PC-9 (cell line): ENCODE measurements at regions of chr1 and their contacts with region 1.

Region 1: GRCh38 chr1:1890506-1891348 is at the start of gene GNB1:
- DNase-seq: peak; percentile 60 to 89
- H3K4me3 ChIP-seq: peak within 1 kb of the TSS; percentile 91
- H3K27ac ChIP-seq: no peak within 1 kb of the TSS
- H3K4me1 ChIP-seq: peaks cover 35% of the 10 kb centered on the region
- H3K27me3 ChIP-seq: no peaks in the 10 kb centered on the region
- CTCF ChIP-seq: no peak
- total RNA-seq, gene GNB1: 257 and 286 TPM in 2 replicates

Region 2: DNA sequence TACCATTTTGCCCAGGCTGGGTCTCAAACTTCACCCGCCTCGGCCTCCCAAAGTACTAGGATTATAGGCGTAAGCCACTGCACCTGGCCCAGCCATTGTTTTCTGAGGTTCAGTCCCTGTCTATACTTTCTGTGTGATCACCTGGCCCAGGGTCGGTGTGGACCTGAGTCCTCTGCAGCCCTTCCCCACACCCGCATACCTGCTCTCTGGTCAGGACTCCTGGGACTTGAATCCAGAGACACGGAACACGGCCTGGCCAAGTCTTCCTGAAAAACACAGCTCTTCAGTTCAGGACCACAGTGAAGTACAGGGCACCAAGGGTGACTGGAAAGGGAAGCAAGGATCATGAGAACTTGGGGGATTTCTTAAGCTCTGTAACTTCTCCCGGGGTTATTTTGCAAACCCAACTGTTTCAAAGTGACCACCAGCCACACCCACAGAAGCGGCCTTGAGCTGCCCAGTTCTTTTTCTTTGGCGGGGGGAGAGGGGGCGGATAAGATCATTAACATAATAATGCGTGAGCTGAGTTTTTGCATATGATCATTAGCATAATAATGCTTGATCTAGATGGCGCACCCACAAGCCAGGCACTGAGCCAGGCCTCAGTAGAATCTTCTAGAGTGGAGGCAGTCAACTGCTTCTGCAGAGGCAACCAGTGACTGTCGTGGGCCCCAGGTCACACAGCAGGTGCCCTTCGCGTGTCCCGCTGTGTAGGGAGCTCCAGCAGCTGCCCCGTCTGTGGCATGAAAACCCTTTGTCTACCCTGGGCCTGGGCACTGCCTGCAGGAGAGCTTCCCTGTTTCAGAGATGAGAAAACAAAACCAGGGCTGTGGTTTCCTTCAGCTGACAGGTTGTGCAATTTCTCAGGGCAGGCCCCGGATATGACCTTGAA is 110.8 kb before region 1 on chr1:
- CTCF ChIA-PET with region 1: no interaction called
- POLR2A ChIA-PET with region 1: no interaction called
- intact Hi-C with region 1: loop called (anchors 5 kb)
- DNase-seq: peak; percentile 60 to 69
- H3K4me3 ChIP-seq: peak overlapping the region; percentile 93; the same call in 1 of the 2 replicates
- H3K27ac ChIP-seq: peak overlapping the region; percentile 87
- H3K4me1 ChIP-seq: peaks cover 69% of the 10 kb centered on the region
- H3K27me3 ChIP-seq: no peaks in the 10 kb centered on the region
- CTCF ChIP-seq: no peak

Region 3: DNA sequence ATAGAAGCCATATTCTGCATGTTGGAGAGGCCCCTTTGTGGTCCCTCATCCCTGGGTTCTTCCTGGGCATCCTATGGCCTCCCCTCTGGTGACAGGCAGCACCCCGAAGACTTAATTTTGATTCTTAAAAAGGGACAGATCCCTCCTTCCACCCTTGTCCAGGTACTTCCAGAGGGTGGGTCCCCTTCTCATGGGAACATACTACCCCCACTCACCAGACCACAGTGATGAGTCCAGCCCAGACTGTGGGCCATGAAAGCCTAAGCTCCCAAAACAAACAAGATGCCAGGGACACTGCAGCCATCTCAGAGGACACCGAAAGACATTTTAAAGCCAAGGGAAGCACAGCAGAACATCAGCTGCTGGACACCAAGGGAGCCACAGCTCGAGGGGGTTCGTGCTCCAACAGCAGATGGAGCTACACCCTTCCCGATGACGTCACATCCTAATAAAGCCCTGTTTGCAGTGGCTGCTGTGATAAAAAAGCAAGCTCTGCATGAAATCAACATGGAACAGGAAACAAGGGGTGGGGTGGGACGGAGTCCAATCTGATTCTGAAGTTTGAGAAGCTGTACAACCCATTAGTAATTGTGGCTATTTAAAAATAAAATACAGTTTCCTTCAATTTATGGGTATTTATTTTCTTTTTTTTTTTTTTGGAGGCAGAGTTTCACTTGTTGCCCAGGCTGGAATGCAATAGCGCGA is 32.2 kb before region 1 on chr1:
- CTCF ChIA-PET with region 1: interaction called, 9 read pairs
- POLR2A ChIA-PET with region 1: interaction called, 4 read pairs
- intact Hi-C with region 1: loop called (anchors 2 kb)
- DNase-seq: peak in 1 of 2 experiments; percentile 28
- H3K4me3 ChIP-seq: no peak overlapping the region
- H3K27ac ChIP-seq: 0 out of 2 replicates have a peak overlapping the region, but pooled peaks have one; percentile 9
- H3K4me1 ChIP-seq: peaks cover 17% of the 10 kb centered on the region; the same call in 1 of the 2 replicates
- H3K27me3 ChIP-seq: no peaks in the 10 kb centered on the region
- CTCF ChIP-seq: no peak